Activated T-helper 2 cell treated with anti-CD3 and anti-CD28 coated beads, Interferon-gamma antibody, Interleukin-2, Interleukin-4, amounts not matched to agents 10 μg/mL and 5 μg/mL and 100 μg/mL, durations not matched to agents 14 hours and 24 hours and 36 hours (primary cell): ENCODE measurements at regions of chr18 and their contacts with region 1.

Region 1: DNA sequence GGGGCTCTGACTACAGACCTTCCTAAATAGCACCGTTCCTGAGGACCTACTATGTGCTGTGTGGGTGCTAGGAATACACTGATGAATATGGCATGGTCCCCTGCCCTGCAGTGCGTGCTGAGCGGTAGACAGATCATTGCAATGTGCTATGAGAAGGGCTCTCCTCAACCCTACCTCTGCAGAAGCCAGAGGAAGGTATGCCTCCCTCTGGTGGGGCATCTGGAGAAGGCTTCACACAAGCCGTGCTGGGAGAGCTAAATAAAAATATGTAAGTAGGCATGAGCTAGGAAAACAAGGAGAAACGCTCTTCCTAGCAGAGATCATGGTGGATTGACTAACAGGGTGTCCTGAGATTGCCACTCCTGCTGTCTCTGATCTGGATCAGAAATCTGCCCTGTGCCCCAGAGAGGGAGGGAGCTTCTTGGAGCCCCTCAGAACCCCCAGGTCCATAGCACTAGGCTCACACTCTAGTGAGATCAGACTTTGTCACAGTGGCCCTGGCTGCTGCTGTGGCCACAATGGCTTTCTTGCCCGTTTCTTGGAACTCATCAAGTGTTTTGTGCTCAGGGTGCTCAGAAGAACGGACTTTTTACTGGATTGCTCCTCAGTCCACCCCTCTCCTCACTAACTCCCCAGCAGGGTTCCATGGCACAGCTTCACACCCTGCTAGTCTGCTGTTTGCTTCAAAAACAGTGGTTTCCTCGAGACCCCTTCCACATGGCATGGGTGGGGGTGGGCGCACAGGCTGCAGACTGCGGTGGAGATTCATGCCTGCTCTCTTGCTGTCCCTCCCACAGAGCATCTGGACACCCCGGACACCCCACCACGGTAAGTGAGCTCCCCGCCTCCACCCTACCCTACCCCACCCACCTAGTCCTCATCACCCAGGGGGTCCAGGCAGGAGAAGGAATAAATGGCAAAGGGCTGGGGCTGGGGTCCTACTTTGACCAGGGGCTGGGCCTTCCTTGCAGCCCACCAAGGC is 14.2 kb downstream of the SIGLEC15 start:
- DNase-seq: no peak
- H3K4me3 Mint-ChIP-seq: no peak overlapping the region
- H3K27ac Mint-ChIP-seq: no peak overlapping the region
- H3K4me1 Mint-ChIP-seq: peaks cover 3% of the 10 kb centered on the region
- H3K27me3 Mint-ChIP-seq: peaks cover 50% of the 10 kb centered on the region

Region 2: GRCh38 chr18:45528711-45529336 is 310.9 kb before region 1 on chr18:
- intact Hi-C with region 1: no loop called
- DNase-seq: no peak
- H3K4me3 Mint-ChIP-seq: no peak overlapping the region
- H3K27ac Mint-ChIP-seq: no peak overlapping the region
- H3K4me1 Mint-ChIP-seq: no peaks in the 10 kb centered on the region
- H3K27me3 Mint-ChIP-seq: no peaks in the 10 kb centered on the region

Region 3: GRCh38 chr18:45670281-45670962 is 169.3 kb before region 1 on chr18:
- intact Hi-C with region 1: loop called (anchors 2 kb)
- DNase-seq: peak; percentile 43
- H3K4me3 Mint-ChIP-seq: peak overlapping the region; percentile 57
- H3K27ac Mint-ChIP-seq: peak overlapping the region; percentile 88
- H3K4me1 Mint-ChIP-seq: peaks cover 66% of the 10 kb centered on the region
- H3K27me3 Mint-ChIP-seq: peaks cover 24% of the 10 kb centered on the region

Region 4: DNA sequence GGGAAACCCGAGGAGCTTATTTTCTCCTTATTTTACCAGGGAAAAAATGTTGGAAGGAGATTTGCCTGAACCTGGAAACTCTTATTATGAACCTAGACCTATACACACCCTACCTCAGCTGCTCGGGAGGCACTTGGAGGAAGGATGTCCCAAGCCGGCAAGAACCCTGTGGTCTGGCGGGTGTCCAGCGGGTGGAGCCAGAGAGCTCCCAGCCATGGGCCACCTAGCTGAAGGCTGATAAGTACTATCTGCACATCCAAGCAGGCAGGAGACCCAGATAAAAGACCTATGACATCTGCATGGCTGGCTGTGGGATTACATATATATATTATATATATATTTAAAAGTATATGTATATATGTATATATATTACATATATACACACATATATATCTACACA is 116.8 kb before region 1 on chr18:
- intact Hi-C with region 1: loop called (anchors 2 kb)
- DNase-seq: peak; percentile 58
- H3K4me3 Mint-ChIP-seq: no peak overlapping the region
- H3K27ac Mint-ChIP-seq: no peak overlapping the region
- H3K4me1 Mint-ChIP-seq: peaks cover 4% of the 10 kb centered on the region
- H3K27me3 Mint-ChIP-seq: peaks cover 16% of the 10 kb centered on the region

Region 5: DNA sequence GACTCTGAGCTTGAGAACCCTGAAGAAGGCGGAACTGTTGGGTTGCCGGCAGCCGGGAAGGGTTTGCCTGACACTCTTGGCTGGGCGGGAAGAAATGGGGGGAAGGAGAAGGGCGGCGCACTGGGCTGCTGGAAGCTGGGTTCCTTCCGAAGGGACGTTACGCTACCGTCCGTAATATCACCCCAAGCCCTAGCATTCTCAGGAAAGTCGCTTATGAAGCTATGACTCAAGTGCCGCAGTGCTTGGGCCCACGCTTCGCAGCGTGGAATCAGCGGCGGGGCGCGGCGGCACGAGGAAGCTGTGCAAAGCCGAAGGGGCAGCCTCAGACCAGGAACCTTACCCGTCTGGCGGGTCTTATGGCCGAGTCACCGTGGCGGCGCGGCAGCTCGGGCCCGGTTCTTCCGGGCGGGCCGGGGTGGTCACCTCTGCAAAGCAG is 64.4 kb before region 1 on chr18:
- intact Hi-C with region 1: loop called (anchors 5 kb)
- DNase-seq: peak; percentile 18
- H3K4me3 Mint-ChIP-seq: peak overlapping the region; percentile 65
- H3K27ac Mint-ChIP-seq: no peak overlapping the region
- H3K4me1 Mint-ChIP-seq: peaks cover 19% of the 10 kb centered on the region
- H3K27me3 Mint-ChIP-seq: peaks cover 61% of the 10 kb centered on the region

Region 6: GRCh38 chr18:45793306-45793965 is 46.3 kb before region 1 on chr18:
- intact Hi-C with region 1: no loop called
- DNase-seq: no peak
- H3K4me3 Mint-ChIP-seq: no peak overlapping the region
- H3K27ac Mint-ChIP-seq: no peak overlapping the region
- H3K4me1 Mint-ChIP-seq: no peaks in the 10 kb centered on the region
- H3K27me3 Mint-ChIP-seq: peaks cover 2% of the 10 kb centered on the region

Region 7: GRCh38 chr18:45879681-45880655 is 40.3 kb after region 1 on chr18:
- intact Hi-C with region 1: loop called (anchors 5 kb)
- DNase-seq: peak; percentile 52
- H3K4me3 Mint-ChIP-seq: no peak overlapping the region
- H3K27ac Mint-ChIP-seq: no peak overlapping the region
- H3K4me1 Mint-ChIP-seq: peaks cover 12% of the 10 kb centered on the region
- H3K27me3 Mint-ChIP-seq: no peaks in the 10 kb centered on the region

Region 8: DNA sequence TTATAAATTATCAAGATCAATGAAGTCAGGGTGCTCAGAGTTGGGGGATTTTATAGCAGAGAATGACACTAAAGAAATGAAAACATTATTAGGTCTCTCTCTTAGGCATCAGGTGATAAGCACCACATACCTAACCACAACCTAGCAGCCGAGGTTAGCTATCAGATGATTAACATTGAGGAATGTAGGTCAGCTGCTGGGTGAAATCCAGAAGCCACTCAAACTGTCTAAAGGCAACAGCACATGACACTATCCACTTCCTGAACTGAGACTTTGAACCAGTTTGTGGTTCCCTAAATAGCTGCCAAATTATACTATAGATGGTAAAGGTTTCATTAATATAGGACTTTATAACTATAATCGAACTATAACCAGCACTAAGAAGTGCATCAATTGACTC is 122.8 kb after region 1 on chr18:
- intact Hi-C with region 1: no loop called
- DNase-seq: no peak
- H3K4me3 Mint-ChIP-seq: no peak overlapping the region
- H3K27ac Mint-ChIP-seq: no peak overlapping the region
- H3K4me1 Mint-ChIP-seq: peaks cover 47% of the 10 kb centered on the region
- H3K27me3 Mint-ChIP-seq: no peaks in the 10 kb centered on the region

Region 9: GRCh38 chr18:45993389-45993788 is 153.7 kb after region 1 on chr18:
- intact Hi-C with region 1: no loop called
- DNase-seq: no peak
- H3K4me3 Mint-ChIP-seq: no peak overlapping the region
- H3K27ac Mint-ChIP-seq: no peak overlapping the region
- H3K4me1 Mint-ChIP-seq: peaks cover 13% of the 10 kb centered on the region
- H3K27me3 Mint-ChIP-seq: no peaks in the 10 kb centered on the region